ENCODE measurements at regions of chr1 and their contacts with region 1.

Region 1: DNA sequence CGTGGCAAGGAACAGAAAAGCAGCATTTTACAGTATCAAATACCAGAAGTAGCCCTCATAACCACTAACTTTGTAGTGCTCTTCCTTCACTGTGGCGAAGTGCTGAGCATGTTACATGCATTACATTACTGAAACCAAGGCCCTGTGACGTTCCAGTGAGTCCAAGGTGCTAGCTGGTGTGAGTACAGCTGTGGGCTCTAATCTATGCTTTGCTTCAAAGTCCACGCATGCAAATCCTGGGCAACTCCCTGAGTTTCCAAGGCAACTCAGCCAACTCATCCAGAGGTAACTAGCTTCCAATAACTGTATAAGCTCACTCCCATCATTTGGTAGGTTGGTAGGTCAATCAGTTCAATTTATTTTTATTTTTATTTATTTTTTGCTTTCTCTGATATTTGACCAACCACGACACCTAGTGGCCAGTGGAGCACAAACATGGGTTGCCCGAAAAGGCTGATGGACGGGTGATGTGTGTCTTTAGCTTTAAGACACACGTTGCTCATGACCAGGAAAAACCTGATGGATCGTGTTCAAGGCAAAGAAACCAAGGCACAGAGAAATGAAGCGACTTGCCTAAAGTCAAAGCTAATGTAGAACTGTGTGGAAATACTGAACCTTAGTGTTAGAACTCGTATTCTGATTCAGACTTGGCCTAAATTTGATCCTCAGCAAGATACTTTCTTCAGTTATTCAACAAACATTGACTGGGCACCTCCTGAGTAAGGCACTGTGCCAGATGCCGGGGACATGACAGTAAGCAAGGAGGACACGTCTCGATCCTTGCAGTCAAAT is 73.0 kb downstream of the GNG12 start:
- DNase-seq: peak; percentile 78
- CTCF ChIP-seq: peak; percentile 77

Region 2: DNA sequence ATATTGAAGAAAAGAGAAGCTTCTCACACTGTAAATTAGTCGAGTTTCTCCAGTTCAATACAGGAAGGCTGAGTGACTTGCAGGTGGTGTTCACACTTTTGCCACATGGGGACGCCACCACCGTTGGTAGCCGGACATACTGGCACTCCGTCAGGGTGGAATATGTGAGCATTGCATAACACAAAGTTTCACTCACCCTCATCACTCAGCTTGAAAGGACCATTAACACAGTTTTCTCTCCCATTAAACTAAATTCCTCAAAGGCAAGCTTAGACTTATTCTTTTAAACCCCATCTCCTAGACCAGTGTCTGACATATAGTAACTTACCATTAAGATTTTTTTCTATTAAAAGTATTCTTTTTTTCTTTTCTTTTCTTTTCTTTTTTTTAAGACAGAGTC is 224.8 kb before region 1 on chr1:
- CTCF ChIA-PET with region 1: interaction called, 31 read pairs
- POLR2A ChIA-PET with region 1: no interaction called
- DNase-seq: peak; percentile 43
- CTCF ChIP-seq: peak; percentile 50

Region 3: GRCh38 chr1:67570473-67571143 is 189.6 kb before region 1 on chr1:
- CTCF ChIA-PET with region 1: interaction called, 12 read pairs
- POLR2A ChIA-PET with region 1: no interaction called
- DNase-seq: no peak
- CTCF ChIP-seq: no peak

Region 4: GRCh38 chr1:67618285-67619018 is 141.8 kb before region 1 on chr1:
- CTCF ChIA-PET with region 1: no interaction called
- POLR2A ChIA-PET with region 1: no interaction called
- DNase-seq: no peak
- CTCF ChIP-seq: no peak

Region 5: DNA sequence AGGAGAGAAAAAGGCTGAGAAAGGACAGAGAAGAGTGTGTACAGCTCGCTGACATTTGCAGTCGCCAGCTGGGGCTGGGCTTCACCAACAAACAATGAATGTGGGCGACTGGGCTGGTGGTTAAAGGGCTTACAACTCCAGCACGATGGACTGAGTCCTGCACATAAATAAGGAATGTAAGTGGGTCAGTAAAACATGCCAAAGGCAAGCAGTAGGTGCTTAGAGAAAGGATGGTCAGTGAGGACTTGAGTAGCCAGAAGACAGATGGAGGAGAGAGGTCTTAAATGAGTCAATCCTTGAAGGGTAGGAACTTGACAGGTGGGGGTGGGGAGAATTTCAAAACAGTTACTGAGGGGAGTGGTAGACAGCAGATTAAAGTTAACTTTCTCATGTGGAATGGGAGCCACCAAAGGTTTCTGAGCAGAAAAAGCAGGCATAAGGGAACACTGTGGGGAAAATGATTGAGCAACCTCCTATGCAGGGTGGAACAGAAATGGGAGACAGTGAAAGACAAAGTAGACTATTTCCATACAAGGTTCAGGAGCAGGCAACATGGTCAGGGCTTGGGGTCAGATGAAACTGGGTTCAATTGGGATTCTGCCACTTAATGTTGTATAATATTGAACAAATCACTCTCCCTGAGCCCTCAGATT is 37.8 kb before region 1 on chr1:
- CTCF ChIA-PET with region 1: interaction called, 16 read pairs
- POLR2A ChIA-PET with region 1: no interaction called
- DNase-seq: no peak
- CTCF ChIP-seq: no peak

Region 6: GRCh38 chr1:67749844-67750689 is 10.2 kb before region 1 on chr1:
- CTCF ChIA-PET with region 1: interaction called, 67 read pairs
- POLR2A ChIA-PET with region 1: no interaction called
- DNase-seq: no peak
- CTCF ChIP-seq: no peak

Region 7: GRCh38 chr1:68036946-68037345 is 276.7 kb after region 1 on chr1:
- CTCF ChIA-PET with region 1: no interaction called
- POLR2A ChIA-PET with region 1: no interaction called
- DNase-seq: no peak
- CTCF ChIP-seq: no peak

Measured in GM10248 (cell line).